ENCODE measurements at regions of chr6 and their contacts with region 1.

Region 1: GRCh38 chr6:132785936-132786335 is 12.5 kb downstream of the SLC18B1 start:
- DNase-seq: no peak
- H3K4me3 ChIP-seq: no peak overlapping the region
- H3K27ac ChIP-seq: no peak overlapping the region
- H3K4me1 ChIP-seq: no peaks in the 10 kb centered on the region
- CTCF ChIP-seq: no peak

Region 2: DNA sequence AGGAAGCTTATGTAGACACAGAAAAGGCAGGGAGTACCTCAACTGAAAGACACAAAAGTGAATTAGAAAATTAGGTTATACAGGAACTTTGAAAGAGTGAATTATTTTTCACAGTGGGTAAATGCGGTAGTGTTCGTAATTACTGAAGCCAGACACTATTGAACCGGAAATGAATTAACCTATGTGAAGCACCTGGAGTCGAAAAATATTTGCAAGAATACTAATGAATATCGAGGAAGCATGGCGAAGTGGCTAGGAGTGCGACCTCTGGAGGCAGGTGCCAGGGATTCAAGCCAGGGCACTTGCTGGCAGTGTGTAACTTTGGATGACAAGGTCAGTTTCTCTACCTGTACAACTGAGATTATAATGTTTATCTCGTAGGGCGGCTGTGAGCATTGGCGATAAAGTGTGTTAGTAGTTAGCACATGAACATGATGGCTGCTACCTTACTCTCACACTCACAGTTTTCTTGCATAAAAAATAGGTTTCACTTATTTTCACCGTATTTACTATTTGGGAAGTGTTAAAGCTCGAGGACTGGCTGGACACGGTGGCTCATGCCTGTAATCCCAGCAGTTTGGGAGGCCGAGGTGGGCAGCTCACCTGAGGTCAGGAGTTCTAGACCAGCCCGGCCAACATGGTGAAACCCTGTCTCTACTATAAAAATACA is 13.1 kb after region 1 on chr6:
- CTCF ChIA-PET with region 1: no interaction called
- POLR2A ChIA-PET with region 1: interaction called, 10 read pairs
- intact Hi-C with region 1: no loop called
- DNase-seq: peak; percentile 88
- H3K4me3 ChIP-seq: no peak overlapping the region
- H3K27ac ChIP-seq: no peak overlapping the region
- H3K4me1 ChIP-seq: peaks cover 7% of the 10 kb centered on the region
- CTCF ChIP-seq: peak; percentile 94